OCI-LY7 (cell line): ENCODE measurements at regions of chr17 and their contacts with region 1.

Region 1: DNA sequence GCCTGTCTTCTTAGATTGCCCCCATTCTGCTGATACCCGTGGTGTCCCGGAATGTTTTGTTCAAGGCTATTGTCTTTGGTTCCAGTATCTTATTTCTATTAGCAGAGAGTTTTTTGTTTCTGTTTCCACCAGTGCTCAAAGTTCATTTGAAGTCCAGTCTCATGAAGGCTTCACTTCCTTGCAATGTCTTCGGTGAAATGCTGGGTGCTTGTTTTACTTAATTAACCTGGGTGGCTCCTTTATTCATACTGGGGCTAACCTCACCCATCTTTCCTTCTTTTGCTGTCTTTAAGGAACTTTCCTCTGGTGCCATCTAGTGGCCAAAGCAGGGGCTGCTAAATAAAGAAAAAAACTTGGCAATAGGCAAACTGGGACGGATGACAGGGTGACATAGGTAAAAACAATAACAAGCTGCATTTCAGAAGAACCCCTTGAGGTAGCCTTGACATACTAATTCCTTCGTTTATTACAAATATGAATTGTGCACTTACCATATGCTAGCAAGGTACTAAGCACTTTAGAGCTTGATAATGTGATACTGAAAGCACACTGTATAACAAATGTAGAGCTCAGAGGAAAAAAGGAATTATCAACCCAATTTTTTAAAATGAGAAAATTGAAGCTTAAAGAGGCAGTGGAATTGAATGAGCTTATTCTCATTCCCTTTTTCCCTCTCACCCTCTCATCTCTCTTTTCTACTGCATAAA is 2.8 kb upstream of the SMIM36 start:
- DNase-seq: peak; percentile 83
- H3K4me3 ChIP-seq: no peak overlapping the region
- H3K27ac ChIP-seq: no peak overlapping the region
- H3K4me1 ChIP-seq: peaks cover 18% of the 10 kb centered on the region
- CTCF ChIP-seq: peak; percentile 99

Region 2: DNA sequence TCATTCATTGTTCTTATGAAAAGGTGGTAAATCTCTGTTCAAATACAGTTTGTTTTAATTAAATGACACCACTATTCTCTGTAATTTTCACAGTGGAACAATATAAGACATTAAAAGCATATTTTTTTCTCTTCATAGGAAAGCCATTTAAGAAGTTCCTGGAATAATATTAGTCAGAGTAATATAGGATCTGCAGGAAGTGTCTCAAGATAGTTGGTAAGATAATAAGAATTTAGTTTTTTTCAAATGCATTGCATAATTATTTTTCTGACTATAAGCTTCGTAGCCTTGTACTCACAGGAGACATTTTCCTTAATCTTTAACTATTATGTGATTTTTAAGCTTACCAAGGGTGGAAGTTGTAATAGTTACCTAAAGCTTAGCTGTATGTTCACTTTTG is 528.6 kb before region 1 on chr17:
- CTCF ChIA-PET with region 1: no interaction called
- POLR2A ChIA-PET with region 1: no interaction called
- intact Hi-C with region 1: loop called (anchors 5 kb)
- DNase-seq: no peak
- H3K4me3 ChIP-seq: no peak overlapping the region
- H3K27ac ChIP-seq: no peak overlapping the region
- H3K4me1 ChIP-seq: no peaks in the 10 kb centered on the region
- CTCF ChIP-seq: no peak

Region 3: GRCh38 chr17:55295411-55296170 is 218.4 kb before region 1 on chr17:
- CTCF ChIA-PET with region 1: no interaction called
- POLR2A ChIA-PET with region 1: no interaction called
- intact Hi-C with region 1: loop called (anchors 5 kb)
- DNase-seq: peak; percentile 67
- H3K4me3 ChIP-seq: no peak overlapping the region
- H3K27ac ChIP-seq: no peak overlapping the region
- H3K4me1 ChIP-seq: peaks cover 4% of the 10 kb centered on the region
- CTCF ChIP-seq: peak; percentile 91

Region 4: GRCh38 chr17:55356434-55357328 is 157.4 kb before region 1 on chr17:
- CTCF ChIA-PET with region 1: interaction called, 3 read pairs
- POLR2A ChIA-PET with region 1: interaction called, 4 read pairs
- intact Hi-C with region 1: loop called (anchors 1 kb)
- DNase-seq: peak; percentile 85
- H3K4me3 ChIP-seq: no peak overlapping the region
- H3K27ac ChIP-seq: no peak overlapping the region
- H3K4me1 ChIP-seq: peaks cover 4% of the 10 kb centered on the region
- CTCF ChIP-seq: peak; percentile 95

Region 5: DNA sequence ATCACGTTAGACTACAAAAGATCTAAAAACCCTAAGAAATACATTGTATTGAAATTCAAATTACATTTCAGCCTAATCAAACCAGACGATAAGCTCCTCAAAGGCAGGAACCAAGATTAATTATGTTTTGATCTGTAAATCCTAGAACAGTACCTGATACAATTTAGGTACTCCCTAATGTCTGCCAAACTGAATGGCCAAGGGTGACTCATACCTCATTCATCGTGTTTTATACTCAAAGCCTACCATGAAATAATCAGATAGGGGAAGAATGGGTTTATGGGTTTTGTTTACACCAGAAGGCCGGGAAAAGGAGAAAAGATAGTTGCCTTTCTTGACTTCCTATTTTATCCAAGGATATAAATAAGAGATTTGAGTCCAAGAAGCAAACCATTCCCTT is 111.7 kb before region 1 on chr17:
- CTCF ChIA-PET with region 1: no interaction called
- POLR2A ChIA-PET with region 1: no interaction called
- intact Hi-C with region 1: loop called (anchors 5 kb)
- DNase-seq: no peak
- H3K4me3 ChIP-seq: no peak overlapping the region
- H3K27ac ChIP-seq: no peak overlapping the region
- H3K4me1 ChIP-seq: peaks cover 6% of the 10 kb centered on the region
- CTCF ChIP-seq: no peak

Region 6: GRCh38 chr17:55437159-55437605 is 76.9 kb before region 1 on chr17:
- CTCF ChIA-PET with region 1: no interaction called
- POLR2A ChIA-PET with region 1: interaction called, 3 read pairs
- intact Hi-C with region 1: loop called (anchors 5 kb)
- DNase-seq: peak; percentile 97
- H3K4me3 ChIP-seq: peak overlapping the region; percentile 58
- H3K27ac ChIP-seq: peak overlapping the region; percentile 93
- H3K4me1 ChIP-seq: peaks cover 65% of the 10 kb centered on the region
- CTCF ChIP-seq: no peak